Ovary (tissue), 10 donors: ENCODE measurements at regions of chr4 and their contacts with region 1.

Region 1: DNA sequence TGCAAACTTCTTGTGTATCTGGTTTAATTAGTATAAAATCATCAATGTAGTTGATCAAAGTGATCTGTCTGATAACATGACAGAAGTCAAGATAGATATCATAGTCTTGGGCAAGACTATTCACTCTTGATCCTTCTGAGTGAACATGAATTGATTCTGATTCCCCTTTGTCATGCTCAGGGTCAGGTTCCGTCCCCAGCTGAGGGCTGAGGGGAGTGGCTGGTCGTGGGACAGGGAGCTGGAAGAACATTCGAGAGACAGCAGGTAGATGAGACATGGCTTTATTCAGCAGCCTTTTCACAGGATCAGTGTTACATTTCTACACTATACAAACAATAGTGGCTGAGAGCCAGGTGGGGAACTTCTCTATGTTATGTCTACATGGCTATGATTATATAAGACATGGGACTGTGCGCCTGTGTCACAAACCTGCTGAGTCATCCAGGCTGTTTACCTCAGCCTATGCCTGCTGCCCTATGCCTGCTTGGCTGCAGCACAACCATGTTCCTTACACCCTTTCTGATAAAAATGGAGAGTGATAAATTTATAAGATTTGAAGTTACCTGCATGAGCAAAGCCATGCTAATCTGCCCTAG is 586.9 kb upstream of the NR3C2 start:
- DNase-seq: no peak
- H3K4me3 ChIP-seq: no peak overlapping the region
- H3K27ac ChIP-seq: no peak overlapping the region
- H3K4me1 ChIP-seq: no peaks in the 10 kb centered on the region
- H3K27me3 ChIP-seq: no peaks in the 10 kb centered on the region
- CTCF ChIP-seq: no peak
- EP300 ChIP-seq: no peak
- POLR2A ChIP-seq: no peak

Region 2: DNA sequence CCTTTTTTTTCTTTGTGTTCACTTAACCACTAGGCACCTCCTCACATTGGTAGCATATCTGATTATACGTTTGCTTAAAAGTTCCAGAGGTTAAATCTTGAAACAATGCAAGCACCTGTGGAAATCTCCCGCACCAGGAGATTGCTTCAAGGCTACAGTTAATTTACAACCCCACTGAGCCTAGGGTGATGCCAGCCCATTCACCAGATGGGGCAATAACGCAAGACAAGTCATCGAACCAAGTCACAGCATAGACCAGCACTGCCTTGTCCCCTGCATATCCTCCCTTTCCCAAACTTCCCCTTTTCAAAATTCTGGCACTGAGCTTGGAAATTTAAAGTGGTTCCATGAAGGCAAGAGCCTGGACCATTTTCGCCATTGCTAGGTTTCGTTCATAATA is 320.1 kb before region 1 on chr4:
- intact Hi-C with region 1: no loop called
- DNase-seq: no peak
- H3K4me3 ChIP-seq: no peak overlapping the region
- H3K27ac ChIP-seq: no peak overlapping the region
- H3K4me1 ChIP-seq: no peaks in the 10 kb centered on the region
- H3K27me3 ChIP-seq: no peaks in the 10 kb centered on the region
- CTCF ChIP-seq: no peak
- EP300 ChIP-seq: no peak
- POLR2A ChIP-seq: no peak

Region 3: GRCh38 chr4:149008415-149009025 is 20.6 kb before region 1 on chr4:
- intact Hi-C with region 1: loop called in 1 of 4 experiments (anchors 2 kb)
- DNase-seq: no peak
- H3K4me3 ChIP-seq: no peak overlapping the region
- H3K27ac ChIP-seq: no peak overlapping the region
- H3K4me1 ChIP-seq: no peaks in the 10 kb centered on the region
- H3K27me3 ChIP-seq: no peaks in the 10 kb centered on the region
- CTCF ChIP-seq: no peak
- EP300 ChIP-seq: no peak
- POLR2A ChIP-seq: no peak